ENCODE measurements at regions of chr1 and their contacts with region 1.

Region 1: GRCh38 chr1:172357753-172358385 is 62.6 kb upstream of the C1orf105 start:
- DNase-seq: no peak
- H3K4me3 Mint-ChIP-seq: peak overlapping the region; percentile 11
- H3K27ac Mint-ChIP-seq: no peak overlapping the region
- H3K4me1 Mint-ChIP-seq: peaks cover 70% of the 10 kb centered on the region
- H3K27me3 Mint-ChIP-seq: no peaks in the 10 kb centered on the region
- CTCF ChIP-seq: no peak

Region 2: GRCh38 chr1:172089768-172090510 is 267.9 kb before region 1 on chr1:
- CTCF ChIA-PET with region 1: no interaction called
- intact Hi-C with region 1: loop called (anchors 2 kb)
- DNase-seq: peak; percentile 83
- H3K4me3 Mint-ChIP-seq: no peak overlapping the region
- H3K27ac Mint-ChIP-seq: no peak overlapping the region
- H3K4me1 Mint-ChIP-seq: peaks cover 11% of the 10 kb centered on the region
- H3K27me3 Mint-ChIP-seq: no peaks in the 10 kb centered on the region
- CTCF ChIP-seq: peak; percentile 86

Region 3: DNA sequence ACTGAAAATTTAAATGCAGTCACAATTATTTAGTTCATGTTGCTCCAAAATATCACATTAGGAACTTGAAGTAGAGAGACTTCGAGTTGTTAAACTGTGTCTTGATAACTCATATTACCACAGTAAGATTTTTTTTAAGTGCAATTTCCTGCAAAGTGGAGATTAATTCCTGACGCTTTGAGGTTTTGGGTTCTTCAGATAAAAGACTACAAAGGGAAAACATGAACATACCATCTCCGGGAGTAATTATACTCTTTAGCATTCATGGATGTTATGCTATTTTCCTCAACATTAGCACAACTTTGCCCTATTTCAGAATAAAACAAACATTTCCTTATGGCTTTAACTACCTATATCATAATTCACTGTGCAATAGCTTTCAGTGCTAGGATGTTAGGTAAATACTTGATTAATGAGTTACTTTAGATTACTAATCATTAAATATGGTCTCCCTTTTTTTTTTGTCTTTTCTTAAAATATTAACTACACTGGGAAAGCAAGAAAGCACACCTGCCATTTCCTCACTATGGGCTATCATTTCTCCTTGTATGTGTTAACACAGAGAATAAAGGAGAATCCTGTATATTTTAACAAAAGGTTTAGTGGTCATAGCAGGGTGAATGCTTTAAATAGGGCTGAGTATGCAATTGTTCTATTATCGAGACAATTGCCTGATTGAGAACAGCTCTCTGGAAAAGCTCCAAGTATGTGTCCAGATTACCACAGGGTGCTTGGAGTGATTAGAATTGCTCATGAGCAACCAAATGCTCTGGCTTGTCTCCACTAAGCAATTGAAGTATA is 189.9 kb before region 1 on chr1:
- CTCF ChIA-PET with region 1: interaction called, 6 read pairs
- intact Hi-C with region 1: loop called (anchors 1 kb)
- DNase-seq: peak; percentile 62
- H3K4me3 Mint-ChIP-seq: peak overlapping the region; percentile 27
- H3K27ac Mint-ChIP-seq: peak overlapping the region; percentile 58
- H3K4me1 Mint-ChIP-seq: peaks cover 73% of the 10 kb centered on the region
- H3K27me3 Mint-ChIP-seq: no peaks in the 10 kb centered on the region
- CTCF ChIP-seq: no peak

Region 4: DNA sequence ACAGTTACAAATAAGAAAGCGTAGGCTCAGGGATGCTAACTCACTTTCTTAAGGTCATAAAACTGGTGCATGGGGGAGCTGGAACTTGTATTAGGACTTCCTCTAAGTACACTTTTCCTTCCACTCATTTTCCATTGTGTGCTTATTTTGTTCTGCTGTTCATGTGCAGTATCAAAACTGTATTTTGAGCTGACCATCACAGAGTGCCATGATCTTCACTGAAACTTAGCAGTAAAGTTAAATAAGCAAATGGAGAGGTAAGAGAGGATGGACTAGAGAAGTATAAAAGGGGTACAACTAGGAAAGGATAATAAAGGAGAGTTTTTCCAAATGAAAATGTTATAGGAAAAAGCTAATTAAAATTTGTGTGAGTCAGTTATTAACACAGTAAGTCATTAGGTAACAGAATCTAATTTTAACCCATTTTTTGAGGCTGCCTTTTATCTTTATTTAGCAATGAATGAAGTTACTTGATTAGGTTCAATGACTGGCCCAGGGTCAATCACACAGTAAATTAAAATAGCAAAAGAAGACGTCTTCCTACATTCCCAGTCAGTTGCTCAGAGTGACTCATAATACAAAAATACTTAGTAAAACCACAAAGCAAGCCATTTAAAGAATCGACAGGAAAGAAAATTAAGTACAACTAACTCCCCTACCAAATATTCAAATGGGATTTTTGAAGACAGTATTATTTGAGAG is 103.2 kb before region 1 on chr1:
- CTCF ChIA-PET with region 1: no interaction called
- intact Hi-C with region 1: loop called (anchors 2 kb)
- DNase-seq: peak; percentile 24
- H3K4me3 Mint-ChIP-seq: no peak overlapping the region
- H3K27ac Mint-ChIP-seq: peak overlapping the region; percentile 32
- H3K4me1 Mint-ChIP-seq: peaks cover 30% of the 10 kb centered on the region
- H3K27me3 Mint-ChIP-seq: no peaks in the 10 kb centered on the region
- CTCF ChIP-seq: no peak

Region 5: DNA sequence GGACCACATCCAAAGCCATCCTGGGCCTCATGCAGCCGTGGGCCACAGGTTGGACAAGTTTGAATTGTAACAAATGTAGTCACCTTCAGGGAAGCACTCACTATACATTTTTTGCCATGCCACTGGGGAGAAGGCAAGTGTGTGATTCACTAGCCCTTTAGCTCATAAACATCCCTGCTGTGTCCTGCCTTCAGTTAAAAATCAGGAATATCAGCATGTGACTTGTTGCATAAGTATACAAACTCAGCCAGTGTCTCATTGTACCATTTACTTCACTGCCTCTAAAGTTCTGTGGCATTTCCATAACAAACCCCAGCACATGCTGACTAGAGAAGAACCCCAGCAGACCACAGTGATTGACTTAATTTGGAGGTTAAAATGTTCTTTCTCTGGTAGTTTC is 79.4 kb before region 1 on chr1:
- CTCF ChIA-PET with region 1: no interaction called
- intact Hi-C with region 1: loop called (anchors 5 kb)
- DNase-seq: no peak
- H3K4me3 Mint-ChIP-seq: no peak overlapping the region
- H3K27ac Mint-ChIP-seq: no peak overlapping the region
- H3K4me1 Mint-ChIP-seq: peaks cover 51% of the 10 kb centered on the region
- H3K27me3 Mint-ChIP-seq: no peaks in the 10 kb centered on the region
- CTCF ChIP-seq: no peak

Region 6: DNA sequence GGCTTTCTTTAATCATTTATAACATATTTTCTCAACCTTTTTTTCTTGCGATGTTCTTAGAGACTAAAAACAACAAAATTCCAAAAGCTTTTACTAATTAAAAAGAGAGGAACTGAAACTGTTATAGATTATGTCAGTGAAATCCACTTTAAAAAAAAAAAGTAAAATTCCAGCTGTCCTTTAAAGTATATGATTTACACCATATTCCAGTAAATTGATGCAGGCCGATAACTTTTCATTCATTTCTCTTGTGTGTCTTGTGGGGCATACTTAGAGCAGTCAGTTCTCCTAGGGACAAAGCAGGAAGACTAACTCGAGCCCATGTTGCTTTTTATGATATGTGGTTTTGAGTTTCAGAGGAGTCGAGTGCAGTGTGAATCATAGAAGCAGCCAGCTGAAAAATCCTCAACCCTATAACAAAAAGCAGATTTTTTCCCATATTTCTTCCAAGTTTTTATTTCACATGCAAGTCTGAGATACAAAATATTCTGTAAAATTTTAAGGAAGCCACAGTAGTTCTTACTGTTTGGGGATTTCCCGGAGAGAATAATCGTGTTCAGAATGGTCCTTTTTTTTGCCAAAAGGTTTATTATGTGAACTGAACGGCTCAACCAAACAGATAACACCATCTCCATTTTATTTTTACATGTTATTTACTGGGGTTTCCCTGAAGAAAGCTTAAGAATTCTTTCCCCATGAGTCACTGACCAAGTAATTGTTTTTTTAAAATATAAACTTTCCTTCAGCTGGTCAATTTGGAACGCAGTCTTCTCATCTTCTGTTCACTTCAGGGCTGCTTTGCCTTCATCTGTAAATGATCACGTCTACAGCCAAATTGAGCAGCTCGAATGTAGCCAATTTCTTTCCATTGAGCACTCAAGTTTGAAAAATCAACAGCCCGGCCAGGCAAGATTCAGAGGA is 14.4 kb before region 1 on chr1:
- CTCF ChIA-PET with region 1: interaction called, 7 read pairs
- intact Hi-C with region 1: loop called (anchors 2 kb)
- DNase-seq: no peak
- H3K4me3 Mint-ChIP-seq: peak overlapping the region; percentile 24
- H3K27ac Mint-ChIP-seq: peak overlapping the region; percentile 82
- H3K4me1 Mint-ChIP-seq: peaks cover 26% of the 10 kb centered on the region
- H3K27me3 Mint-ChIP-seq: no peaks in the 10 kb centered on the region
- CTCF ChIP-seq: no peak

Region 7: GRCh38 chr1:172517081-172517480 is 159.2 kb after region 1 on chr1:
- CTCF ChIA-PET with region 1: interaction called, 13 read pairs
- intact Hi-C with region 1: no loop called
- DNase-seq: no peak
- H3K4me3 Mint-ChIP-seq: no peak overlapping the region
- H3K27ac Mint-ChIP-seq: no peak overlapping the region
- H3K4me1 Mint-ChIP-seq: no peaks in the 10 kb centered on the region
- H3K27me3 Mint-ChIP-seq: no peaks in the 10 kb centered on the region
- CTCF ChIP-seq: no peak

Region 8: DNA sequence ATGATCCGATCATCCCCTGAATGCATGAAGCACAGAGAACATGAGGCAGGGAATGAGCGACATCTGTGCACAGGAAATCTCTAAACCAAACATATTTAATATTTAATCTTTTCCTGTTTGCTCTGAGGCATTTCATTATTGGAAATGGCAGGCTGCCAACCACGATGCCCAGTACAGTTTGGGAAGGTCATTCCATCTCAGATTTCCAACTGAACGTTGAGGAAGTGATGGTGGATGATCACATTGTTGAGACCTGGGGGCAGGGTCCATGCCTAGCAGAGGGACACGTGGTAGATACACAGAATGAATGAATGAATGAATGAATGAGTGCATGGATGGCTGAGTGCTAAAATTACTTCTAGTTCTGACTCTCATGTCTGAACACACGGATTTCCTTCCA is 285.1 kb after region 1 on chr1:
- CTCF ChIA-PET with region 1: no interaction called
- intact Hi-C with region 1: no loop called
- DNase-seq: peak; percentile 81
- H3K4me3 Mint-ChIP-seq: peak overlapping the region; percentile 23
- H3K27ac Mint-ChIP-seq: peak overlapping the region; percentile 90
- H3K4me1 Mint-ChIP-seq: peaks cover 66% of the 10 kb centered on the region
- H3K27me3 Mint-ChIP-seq: no peaks in the 10 kb centered on the region
- CTCF ChIP-seq: no peak